Uterus (tissue), 4 donors: ENCODE measurements at regions of chr17 and their contacts with region 1.

Region 1: GRCh38 chr17:57747221-57748017 is 2.3 kb upstream of the CCDC182 start:
- DNase-seq: peak in 1 of 2 donors; percentile 28
- H3K4me3 ChIP-seq: no peak overlapping the region
- H3K27ac ChIP-seq: no peak overlapping the region
- H3K4me1 ChIP-seq: no peaks in the 10 kb centered on the region
- H3K27me3 ChIP-seq: no peaks in the 10 kb centered on the region
- CTCF ChIP-seq: peak; percentile 52 to 70 (median 63)
- POLR2A ChIP-seq: no peak

Region 2: GRCh38 chr17:57130761-57131461 is 616.5 kb before region 1 on chr17:
- intact Hi-C with region 1: loop called (anchors 5 kb)
- DNase-seq: peak; percentile 80 to 83
- H3K4me3 ChIP-seq: no peak overlapping the region
- H3K27ac ChIP-seq: no peak overlapping the region
- H3K4me1 ChIP-seq: no peaks in the 10 kb centered on the region
- H3K27me3 ChIP-seq: no peaks in the 10 kb centered on the region
- CTCF ChIP-seq: peak; percentile 65 to 94 (median 78)
- POLR2A ChIP-seq: no peak

Region 3: GRCh38 chr17:57902800-57903759 is 155.7 kb after region 1 on chr17:
- intact Hi-C with region 1: no loop called
- DNase-seq: peak; percentile 68 to 75
- H3K4me3 ChIP-seq: no peak overlapping the region
- H3K27ac ChIP-seq: peak overlapping the region; percentile 60 to 72
- H3K4me1 ChIP-seq: peaks cover 4 to 30% of the 10 kb centered on the region in 2 donors
- H3K27me3 ChIP-seq: no peaks in the 10 kb centered on the region
- CTCF ChIP-seq: no peak
- POLR2A ChIP-seq: no peak